Activated CD4-positive, alpha-beta T cell treated with anti-CD3 and anti-CD28 coated beads for 36 hours (primary cell): ENCODE measurements at regions of chr1 and their contacts with region 1.

Region 1: GRCh38 chr1:33349778-33350610 is 29.1 kb upstream of the A3GALT2 start:
- DNase-seq: peak; percentile 87
- ATAC-seq: peak; percentile 87
- H3K4me3 Mint-ChIP-seq: peak overlapping the region; percentile 89
- H3K27ac Mint-ChIP-seq: peak overlapping the region; percentile 93
- H3K4me1 Mint-ChIP-seq: peaks cover 43% of the 10 kb centered on the region
- H3K27me3 Mint-ChIP-seq: no peaks in the 10 kb centered on the region

Region 2: GRCh38 chr1:33036526-33037503 is 313.2 kb before region 1 on chr1 and contains the start of gene AK2:
- CTCF ChIA-PET with region 1: no interaction called
- POLR2A ChIA-PET with region 1: interaction called, 3 read pairs
- intact Hi-C with region 1: loop called in 1 of 2 experiments (anchors 2 kb)
- DNase-seq: peak; percentile 96
- ATAC-seq: peak; percentile 100
- H3K4me3 Mint-ChIP-seq: peak within 1 kb of the TSS; percentile 96
- H3K27ac Mint-ChIP-seq: peak within 1 kb of the TSS; percentile 87
- H3K4me1 Mint-ChIP-seq: peaks cover 41% of the 10 kb centered on the region
- H3K27me3 Mint-ChIP-seq: no peaks in the 10 kb centered on the region
- total RNA-seq, gene AK2: 386 to 464 TPM

Region 3: GRCh38 chr1:33181921-33182341 is 168.1 kb before region 1 on chr1 and contains the start of gene TRIM62:
- CTCF ChIA-PET with region 1: no interaction called
- POLR2A ChIA-PET with region 1: no interaction called
- intact Hi-C with region 1: loop called (anchors 1 to 5 kb)
- DNase-seq: peak; percentile 84
- ATAC-seq: peak; percentile 35
- H3K4me3 Mint-ChIP-seq: peak within 1 kb of the TSS; percentile 79
- H3K27ac Mint-ChIP-seq: peak within 1 kb of the TSS; percentile 74
- H3K4me1 Mint-ChIP-seq: peaks cover 25% of the 10 kb centered on the region
- H3K27me3 Mint-ChIP-seq: peaks cover 5% of the 10 kb centered on the region
- total RNA-seq, gene TRIM62: 3.6 to 3.7 TPM

Region 4: GRCh38 chr1:33256701-33257399 is 93.1 kb before region 1 on chr1:
- CTCF ChIA-PET with region 1: no interaction called
- POLR2A ChIA-PET with region 1: interaction called, 3 read pairs
- intact Hi-C with region 1: loop called (anchors 1 to 5 kb)
- DNase-seq: peak; percentile 72
- ATAC-seq: peak; percentile 50
- H3K4me3 Mint-ChIP-seq: peak overlapping the region; percentile 95
- H3K27ac Mint-ChIP-seq: peak overlapping the region; percentile 98
- H3K4me1 Mint-ChIP-seq: peaks cover 39% of the 10 kb centered on the region
- H3K27me3 Mint-ChIP-seq: no peaks in the 10 kb centered on the region

Region 5: GRCh38 chr1:33430692-33431593 is 80.9 kb after region 1 on chr1 and contains the start of gene PHC2:
- CTCF ChIA-PET with region 1: no interaction called
- POLR2A ChIA-PET with region 1: interaction called, 3 read pairs
- intact Hi-C with region 1: loop called (anchors 1 to 5 kb)
- DNase-seq: peak; percentile 95
- ATAC-seq: peak; percentile 99
- H3K4me3 Mint-ChIP-seq: peak within 1 kb of the TSS; percentile 58
- H3K27ac Mint-ChIP-seq: no peak within 1 kb of the TSS
- H3K4me1 Mint-ChIP-seq: peaks cover 5% of the 10 kb centered on the region
- H3K27me3 Mint-ChIP-seq: peaks cover 5% of the 10 kb centered on the region
- total RNA-seq, gene PHC2: 23.8 to 28.4 TPM